Mammary epithelial cell (primary cell): ENCODE measurements at regions of chrX and their contacts with region 1.

Region 1: DNA sequence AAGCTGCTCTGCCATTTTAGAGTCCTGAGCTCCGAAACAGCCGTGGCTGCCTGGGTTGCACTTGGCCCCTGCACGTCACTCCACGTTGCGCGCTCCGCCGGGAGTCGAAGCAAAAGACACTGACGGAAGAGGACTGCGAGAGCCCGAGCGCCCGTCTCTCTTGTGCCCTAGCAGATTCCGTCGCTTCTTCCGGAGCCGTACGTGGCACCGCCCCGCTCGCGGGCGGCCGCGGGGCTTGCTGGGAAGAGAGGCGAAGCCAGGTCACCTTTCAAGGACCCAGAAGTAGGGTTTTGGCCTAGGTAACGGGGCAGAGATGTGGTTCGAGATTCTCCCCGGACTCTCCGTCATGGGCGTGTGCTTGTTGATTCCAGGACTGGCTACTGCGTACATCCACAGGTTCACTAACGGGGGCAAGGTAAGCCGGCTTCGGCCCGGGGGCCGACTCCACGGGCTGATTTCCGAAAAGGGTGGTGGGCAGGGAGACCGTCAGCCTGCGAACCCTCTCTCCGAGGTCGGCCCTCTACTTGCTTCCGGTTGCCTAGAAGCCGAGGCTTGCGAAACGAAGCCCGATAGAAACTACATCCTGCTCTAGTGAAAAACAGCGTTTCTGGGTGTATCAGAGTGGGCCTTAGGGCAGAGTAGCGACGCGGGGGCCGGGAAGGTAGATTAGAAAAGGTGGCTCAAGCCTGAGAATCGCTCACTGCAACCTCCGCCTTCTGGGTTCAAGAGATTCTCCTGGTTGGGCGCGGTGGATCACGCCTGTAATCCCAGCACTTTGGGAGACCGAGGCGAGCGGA is at the starts of genes NDUFA1 and RNF113A:
- DNase-seq: peak; percentile 84
- H3K4me3 ChIP-seq: peak within 1 kb of the TSS; percentile 49 to 74 (median 55)
- H3K27ac ChIP-seq: peak within 1 kb of the TSS; percentile 82
- H3K4me1 ChIP-seq: no peaks in the 10 kb centered on the region
- H3K27me3 ChIP-seq: no peaks in the 10 kb centered on the region
- CTCF ChIP-seq: no peak
- total RNA-seq, gene NDUFA1: 28.3 to 82.0 TPM
- total RNA-seq, gene RNF113A: 10.5 to 15.2 TPM

Region 2: GRCh38 chrX:119852382-119853353 is 19.1 kb before region 1 on chrX and contains the start of gene UPF3B:
- CTCF ChIA-PET with region 1: no interaction called
- dilution Hi-C with region 1: no loop called
- in situ Hi-C with region 1: no loop called
- intact Hi-C with region 1: loop called (anchors 1 kb)
- DNase-seq: peak; percentile 96
- H3K4me3 ChIP-seq: peak within 1 kb of the TSS; percentile 65 to 76 (median 71)
- H3K27ac ChIP-seq: peak within 1 kb of the TSS; percentile 51
- H3K4me1 ChIP-seq: no peaks in the 10 kb centered on the region
- H3K27me3 ChIP-seq: no peaks in the 10 kb centered on the region
- CTCF ChIP-seq: no peak
- total RNA-seq, gene UPF3B: 1.0 to 10.0 TPM